ENCODE measurements at regions of chr7 and their contacts with region 1.

Region 1: DNA sequence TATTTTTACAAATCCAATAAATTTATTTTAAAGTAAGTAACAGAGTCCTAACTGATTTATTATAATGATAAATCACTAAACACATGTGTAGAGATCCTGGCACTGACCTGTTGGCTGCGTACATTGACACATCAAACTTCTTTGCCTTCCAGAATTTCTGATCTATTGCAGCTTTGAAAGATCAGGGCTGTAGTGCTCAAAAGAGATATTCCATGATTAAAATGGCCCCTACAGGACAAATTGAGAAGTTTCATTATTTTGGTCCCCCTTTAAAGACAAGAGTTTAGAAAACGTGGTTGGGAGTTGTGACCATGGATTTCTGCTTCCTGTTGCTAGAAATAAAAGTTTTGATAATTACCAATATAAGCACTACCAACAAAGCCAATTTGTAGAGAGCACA is 87.7 kb upstream of the PDK4 start:
- DNase-seq: peak; percentile 10 to 38 (median 16)
- H3K4me3 ChIP-seq: no peak overlapping the region
- H3K27ac ChIP-seq: no peak overlapping the region
- H3K4me1 ChIP-seq: peaks cover 0 to 5% (median 2%) of the 10 kb centered on the region in 4 experiments
- H3K27me3 ChIP-seq: no peaks in the 10 kb centered on the region

Region 2: GRCh38 chr7:95511716-95512260 is 172.2 kb before region 1 on chr7:
- CTCF ChIA-PET with region 1: interaction called, 187 read pairs
- POLR2A ChIA-PET with region 1: no interaction called
- DNase-seq: peak; percentile 88 to 94 (median 93)
- H3K4me3 ChIP-seq: peak overlapping the region in 2 of 7 experiments; percentile 14 to 16
- H3K27ac ChIP-seq: no peak overlapping the region
- H3K4me1 ChIP-seq: peaks cover 0 to 20% (median 9%) of the 10 kb centered on the region in 4 experiments
- H3K27me3 ChIP-seq: no peaks in the 10 kb centered on the region

Region 3: DNA sequence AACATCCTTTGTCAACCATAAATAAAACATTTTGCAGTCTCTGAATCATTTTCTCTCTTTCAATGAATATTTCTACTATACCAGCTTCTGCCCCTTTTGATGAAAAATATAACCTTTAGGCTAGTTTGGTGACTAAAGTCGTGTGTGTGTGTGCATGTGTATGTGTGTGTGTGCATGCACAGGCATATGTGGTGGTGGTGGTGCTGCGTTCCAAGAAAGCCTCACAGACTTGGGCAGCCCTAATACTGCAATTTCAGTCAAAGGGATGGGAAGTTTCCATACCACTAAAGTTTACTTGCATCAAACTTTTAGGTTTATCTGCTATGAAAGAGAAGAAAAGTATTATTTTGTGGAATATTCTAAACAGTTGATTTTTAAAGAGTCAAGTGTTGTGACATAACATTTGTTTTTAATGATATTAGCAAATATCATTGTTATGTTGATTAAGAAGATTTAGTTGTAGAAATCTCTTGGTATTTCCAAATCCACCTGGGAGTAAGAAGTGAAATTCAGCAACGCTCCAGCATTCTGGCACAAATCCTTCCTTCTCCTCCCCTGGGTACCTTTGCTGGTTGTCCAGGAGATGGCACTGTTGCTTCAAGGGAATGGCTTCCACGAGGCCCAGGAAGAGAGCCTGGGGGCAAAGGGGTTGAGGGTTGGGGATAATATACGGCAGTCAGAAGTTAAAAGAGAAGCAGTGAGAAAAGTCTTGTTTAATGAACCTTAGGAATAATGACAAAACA is 156.8 kb before region 1 on chr7:
- CTCF ChIA-PET with region 1: interaction called, 309 read pairs
- POLR2A ChIA-PET with region 1: no interaction called
- DNase-seq: peak; percentile 42 to 71 (median 63)
- H3K4me3 ChIP-seq: no peak overlapping the region
- H3K27ac ChIP-seq: no peak overlapping the region
- H3K4me1 ChIP-seq: peaks cover 0 to 10% (median 5%) of the 10 kb centered on the region in 4 experiments
- H3K27me3 ChIP-seq: no peaks in the 10 kb centered on the region

Region 4: GRCh38 chr7:95545078-95545498 is 138.9 kb before region 1 on chr7:
- CTCF ChIA-PET with region 1: interaction called, 75 read pairs
- POLR2A ChIA-PET with region 1: no interaction called
- DNase-seq: peak; percentile 16 to 42 (median 33)
- H3K4me3 ChIP-seq: peak overlapping the region in 1 of 7 experiments; percentile 41
- H3K27ac ChIP-seq: no peak overlapping the region
- H3K4me1 ChIP-seq: peaks cover 0 to 3% (median 0%) of the 10 kb centered on the region in 4 experiments
- H3K27me3 ChIP-seq: no peaks in the 10 kb centered on the region

Region 5: GRCh38 chr7:95642173-95642572 is 41.9 kb before region 1 on chr7:
- CTCF ChIA-PET with region 1: no interaction called
- POLR2A ChIA-PET with region 1: no interaction called
- DNase-seq: no peak
- H3K4me3 ChIP-seq: no peak overlapping the region
- H3K27ac ChIP-seq: no peak overlapping the region
- H3K4me1 ChIP-seq: no peaks in the 10 kb centered on the region
- H3K27me3 ChIP-seq: no peaks in the 10 kb centered on the region

Region 6: GRCh38 chr7:95715274-95715673 is 31.2 kb after region 1 on chr7:
- CTCF ChIA-PET with region 1: no interaction called
- POLR2A ChIA-PET with region 1: no interaction called
- DNase-seq: no peak
- H3K4me3 ChIP-seq: no peak overlapping the region
- H3K27ac ChIP-seq: no peak overlapping the region
- H3K4me1 ChIP-seq: no peaks in the 10 kb centered on the region
- H3K27me3 ChIP-seq: no peaks in the 10 kb centered on the region

Region 7: GRCh38 chr7:96591900-96592676 is 908.1 kb after region 1 on chr7:
- CTCF ChIA-PET with region 1: no interaction called
- POLR2A ChIA-PET with region 1: no interaction called
- DNase-seq: peak in 1 of 3 donors; percentile 1
- H3K4me3 ChIP-seq: no peak overlapping the region
- H3K27ac ChIP-seq: no peak overlapping the region
- H3K4me1 ChIP-seq: no peaks in the 10 kb centered on the region
- H3K27me3 ChIP-seq: peaks cover 0 to 18% (median 4%) of the 10 kb centered on the region in 5 experiments